Posterior cingulate gyrus (tissue), 11 donors: ENCODE measurements at regions of chrX and their contacts with region 1.

Region 1: DNA sequence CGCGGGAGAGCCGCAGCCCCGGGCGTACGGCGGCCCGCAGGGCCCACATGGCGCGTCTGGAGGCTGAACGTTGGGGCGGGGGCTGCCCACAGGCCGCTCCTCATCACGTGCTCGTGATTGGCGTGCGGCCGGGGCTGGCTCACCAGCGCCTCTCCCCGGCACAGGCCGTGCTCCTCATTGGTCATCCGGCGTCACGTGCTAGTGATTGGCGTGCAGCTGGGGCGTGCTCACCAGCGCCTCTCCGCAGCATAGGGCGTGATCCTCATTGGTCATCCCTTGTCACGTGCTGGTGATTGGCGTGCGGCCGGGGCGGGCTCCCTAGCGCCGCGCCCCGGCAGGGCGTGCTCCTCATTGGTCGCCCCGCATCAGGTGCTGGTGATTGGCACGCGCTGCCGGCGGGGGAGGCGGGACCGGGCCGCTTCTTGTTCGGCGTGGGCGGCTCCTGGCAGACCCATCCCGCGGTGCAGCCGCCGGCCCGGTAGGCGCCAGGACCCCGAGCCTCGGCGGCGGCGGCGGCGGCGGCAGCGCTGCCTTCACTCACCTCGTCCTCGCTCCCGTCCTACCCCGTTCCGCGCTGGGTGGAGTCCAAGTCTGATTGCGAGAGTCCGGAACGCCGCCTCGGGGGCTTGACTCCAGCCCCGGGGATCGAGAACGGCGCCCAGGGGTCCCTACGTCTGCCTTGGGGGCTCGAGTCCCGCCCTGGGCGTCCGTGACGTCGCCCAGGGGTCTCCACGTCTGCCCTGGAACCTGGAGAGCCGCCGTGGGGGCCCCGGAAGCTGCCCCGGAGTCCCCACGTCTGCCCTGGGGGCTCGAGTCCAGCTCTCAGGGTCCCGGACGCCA is at the start of gene GTPBP6:
- DNase-seq: peak; percentile 100

Region 2: GRCh38 chrX:357693-358471 is 38.9 kb after region 1 on chrX:
- intact Hi-C with region 1: no loop called
- DNase-seq: peak in 3 of 10 donors; percentile 50 to 71 (median 66)

Region 3: GRCh38 chrX:386768-387575 is 68.0 kb after region 1 on chrX and contains the start of gene PPP2R3B:
- intact Hi-C with region 1: loop called (anchors 1 kb)
- DNase-seq: peak; percentile 97 to 100 (median 98)

Region 4: GRCh38 chrX:1420371-1420770 is 1101.4 kb after region 1 on chrX:
- intact Hi-C with region 1: no loop called
- DNase-seq: peak in 3 of 10 donors; percentile 48 to 64 (median 59)